Dorsolateral prefrontal cortex (tissue), 120 donors: ENCODE measurements at regions of chr15 and their contacts with region 1.

Region 1: DNA sequence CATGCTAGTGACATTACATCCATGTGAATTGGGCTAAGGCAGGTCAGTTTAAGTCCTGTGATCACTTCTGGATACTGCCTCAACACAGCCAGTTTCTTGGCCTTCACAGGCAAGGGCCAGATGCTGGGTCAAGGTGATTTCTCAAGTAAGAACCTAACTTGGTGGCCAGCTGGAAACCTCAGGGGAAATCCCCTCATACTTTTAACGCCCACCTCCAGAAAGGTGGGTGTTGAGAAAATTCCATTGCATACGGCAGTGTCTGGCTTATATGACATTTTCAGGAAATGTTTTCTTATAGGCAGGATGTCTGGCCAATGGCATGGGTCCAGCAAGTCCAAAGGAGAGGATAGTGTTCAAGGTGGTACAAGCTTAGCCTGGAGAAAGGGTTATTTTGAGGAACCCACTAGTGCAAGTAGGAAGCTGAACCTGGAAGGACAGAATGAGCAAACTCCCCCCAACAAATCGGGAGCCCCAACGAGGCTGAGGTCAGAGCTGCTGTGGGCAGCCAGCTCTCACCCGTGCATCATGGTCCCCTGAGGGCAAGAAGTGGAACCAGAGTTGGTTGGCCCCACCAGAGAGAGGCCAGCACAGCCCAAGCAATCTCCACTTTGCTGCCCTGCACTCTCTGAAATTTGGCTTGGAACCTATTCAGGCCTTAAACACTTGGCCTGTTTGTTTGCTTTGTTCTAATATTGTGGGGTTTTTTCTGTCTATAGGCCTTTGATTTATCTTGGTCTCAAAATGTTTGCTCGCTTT is 135.4 kb downstream of the PDE8A start:
- DNase-seq: no peak
- H3K4me3 ChIP-seq: no peak overlapping the region
- H3K27ac ChIP-seq: peak overlapping the region in 58 of 59 donors; percentile 6 to 100 (median 96)
- H3K27me3 ChIP-seq: no peaks in the 10 kb centered on the region
- CTCF ChIP-seq: no peak

Region 2: DNA sequence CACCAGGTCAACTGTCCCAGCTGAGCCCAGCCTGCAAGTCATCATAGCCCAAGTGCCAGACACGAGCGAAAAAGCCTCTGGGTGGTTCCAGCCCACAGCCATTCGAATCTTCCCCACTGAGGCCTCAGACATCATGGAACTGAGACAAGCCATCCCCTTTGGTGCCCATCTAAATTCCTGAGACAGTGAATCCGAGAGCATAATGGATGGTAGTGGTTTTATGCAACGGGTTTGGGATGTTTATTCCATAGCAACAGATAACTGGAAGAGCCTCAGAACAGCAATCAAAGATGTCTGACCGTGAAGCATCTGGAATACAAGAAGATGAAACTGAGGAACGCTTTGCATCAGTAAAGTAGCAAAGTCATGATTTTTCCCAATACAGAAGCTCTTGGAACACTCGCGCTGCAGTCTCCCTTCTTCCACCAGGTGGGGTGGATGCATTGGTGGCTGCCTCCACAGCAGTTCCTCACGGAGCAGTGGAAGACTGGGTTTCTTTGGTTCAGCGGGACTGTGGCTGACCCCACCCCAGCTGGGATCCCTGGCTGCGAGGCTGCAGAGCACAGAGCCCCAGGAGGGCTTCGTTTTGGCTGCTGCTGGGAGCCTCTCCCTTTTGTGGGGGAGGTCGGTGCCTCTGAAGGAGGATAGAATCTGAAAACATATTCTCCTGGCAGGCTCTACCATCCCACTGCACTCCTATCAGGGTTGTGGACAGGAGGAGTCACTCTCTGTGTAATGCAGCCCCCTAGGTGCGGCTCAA is 161.8 kb before region 1 on chr15:
- intact Hi-C with region 1: loop called in 1 of 2 experiments (anchors 2 kb)
- DNase-seq: peak; percentile 18 to 88 (median 82)
- H3K4me3 ChIP-seq: peak overlapping the region in 58 of 59 donors; percentile 12 to 69 (median 44)
- H3K27ac ChIP-seq: peak overlapping the region in 54 of 59 donors; percentile 8 to 91 (median 68)
- H3K27me3 ChIP-seq: no peaks in the 10 kb centered on the region
- CTCF ChIP-seq: peak; percentile 57 to 93 (median 87)